HEK293T (cell line): ENCODE measurements at regions of chr11 and their contacts with region 1.

Region 1: GRCh38 chr11:60913793-60914632 is at the start of gene TMEM109:
- DNase-seq: peak; percentile 83

Region 2: DNA sequence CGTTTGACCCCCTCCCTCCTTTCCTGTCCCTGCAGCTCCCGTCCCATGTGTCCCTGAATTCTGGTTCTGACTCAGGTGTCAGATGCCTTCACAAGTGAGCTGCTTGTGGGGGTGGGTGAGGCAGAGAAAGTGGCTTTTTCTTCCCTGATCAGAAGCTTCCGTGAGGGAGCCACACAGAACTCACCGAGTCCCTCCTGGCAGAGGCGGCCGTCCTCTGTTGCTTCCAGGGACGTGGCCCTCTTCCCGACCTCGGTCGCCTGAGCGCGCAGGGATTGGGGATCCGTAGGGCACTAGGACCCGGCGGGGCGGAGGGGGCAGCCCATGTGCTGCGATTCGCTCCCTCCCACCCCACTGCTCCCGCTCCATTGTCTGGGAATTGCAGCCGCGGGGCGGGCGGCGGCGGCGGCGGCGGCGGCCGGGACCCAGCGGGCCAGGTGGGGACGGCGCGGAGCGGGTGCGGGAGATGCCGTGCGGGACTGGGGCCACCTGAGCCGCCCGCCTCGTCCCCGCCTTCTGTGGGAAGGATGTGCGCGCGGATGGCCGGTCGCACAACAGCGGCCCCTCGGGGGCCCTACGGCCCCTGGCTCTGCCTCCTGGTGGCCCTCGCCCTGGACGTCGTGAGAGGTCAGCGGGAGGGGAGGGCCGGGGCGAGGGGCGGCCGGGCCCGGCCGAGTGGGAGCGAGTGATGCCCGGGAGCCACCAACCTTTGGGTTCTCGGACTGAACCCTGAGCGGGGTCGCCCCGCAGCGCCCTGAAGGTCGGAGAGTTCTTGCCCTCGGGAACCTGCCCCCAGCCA is 10.3 kb after region 1 on chr11 and contains the start of gene TMEM132A:
- CTCF ChIA-PET with region 1: no interaction called
- POLR2A ChIA-PET with region 1: interaction called, 10 read pairs
- DNase-seq: peak; percentile 89

Region 3: DNA sequence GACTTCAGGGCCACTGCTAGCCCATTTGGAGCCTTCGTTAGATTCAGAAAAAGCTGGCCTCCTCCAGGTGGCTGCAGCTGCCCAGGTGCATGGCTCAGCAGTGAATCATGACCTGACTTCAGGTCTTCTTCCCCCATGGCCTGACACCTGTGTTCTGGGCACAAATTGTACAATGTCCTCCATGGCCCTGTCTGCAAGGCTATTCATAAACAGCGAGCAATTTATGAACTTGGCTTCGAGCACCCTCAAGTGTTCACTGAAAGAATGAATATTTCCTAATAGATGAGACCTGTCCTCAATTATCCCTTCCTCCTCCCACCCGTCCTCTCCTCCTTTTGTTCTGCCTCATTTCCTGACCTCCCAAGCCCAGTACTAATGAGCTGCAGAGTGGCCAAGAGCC is 259.4 kb after region 1 on chr11:
- CTCF ChIA-PET with region 1: interaction called, 13 read pairs
- POLR2A ChIA-PET with region 1: no interaction called
- DNase-seq: no peak